Naive thymus-derived CD8-positive, alpha-beta T cell (primary cell): ENCODE measurements at regions of chr14 and their contacts with region 1.

Region 1: DNA sequence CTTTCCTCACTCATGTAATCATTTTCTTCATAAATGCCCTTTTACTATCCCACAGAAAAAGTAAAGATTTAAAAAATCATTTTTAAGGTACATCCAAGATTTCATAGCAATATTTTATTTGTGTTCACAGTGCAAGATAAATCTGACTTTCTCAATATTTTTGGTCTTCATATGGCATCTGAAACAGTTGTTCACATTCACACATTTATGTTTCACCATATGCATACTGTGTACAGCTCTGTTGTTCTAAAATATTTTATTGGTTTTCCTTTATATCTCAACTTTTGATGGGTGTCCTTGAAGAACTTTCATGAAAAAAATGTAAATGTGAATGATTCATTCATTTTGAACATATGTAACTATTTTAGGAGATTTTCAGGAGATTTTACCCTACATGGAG is 348.7 kb downstream of the SNAPC1 start:
- DNase-seq: no peak
- ATAC-seq: no peak
- H3K4me3 Mint-ChIP-seq: no peak overlapping the region
- H3K27ac Mint-ChIP-seq: no peak overlapping the region
- H3K4me1 Mint-ChIP-seq: peaks cover 0 to 4% (median 0%) of the 10 kb centered on the region in 4 donors
- H3K27me3 Mint-ChIP-seq: peaks cover 9 to 30% (median 22%) of the 10 kb centered on the region in 5 donors

Region 2: DNA sequence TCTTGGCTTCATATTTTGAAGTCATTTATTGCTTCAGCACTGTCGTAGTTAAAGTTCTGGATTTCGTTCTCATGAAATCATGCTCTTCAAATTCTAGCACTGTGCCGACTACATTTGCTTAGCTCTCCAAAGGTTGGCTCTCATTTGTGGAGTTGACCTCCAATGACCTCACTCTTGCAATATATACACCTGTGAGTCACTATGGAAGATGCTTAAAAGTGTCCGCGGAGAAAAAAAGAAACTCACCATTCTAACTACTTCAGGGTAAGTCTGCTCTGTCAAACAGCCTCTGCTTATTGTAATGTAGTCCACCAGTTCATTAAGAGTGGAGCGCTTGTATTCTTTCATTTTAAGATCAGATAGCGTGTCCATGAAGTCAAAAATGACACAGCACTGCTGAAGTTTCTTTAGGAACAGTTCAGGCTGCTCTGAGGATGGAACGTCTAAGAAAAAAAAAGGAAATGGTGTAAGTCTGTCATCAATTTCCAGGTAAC is 1342.5 kb after region 1 on chr14:
- POLR2A ChIA-PET with region 1: interaction called, 13 read pairs
- DNase-seq: no peak
- ATAC-seq: no peak
- H3K4me3 Mint-ChIP-seq: no peak overlapping the region
- H3K27ac Mint-ChIP-seq: no peak overlapping the region
- H3K4me1 Mint-ChIP-seq: peaks cover 24 to 50% (median 35%) of the 10 kb centered on the region in 4 donors
- H3K27me3 Mint-ChIP-seq: no peaks in the 10 kb centered on the region